Posterior vena cava (tissue), 2 donors: ENCODE measurements at regions of chr14 and their contacts with region 1.

Region 1: DNA sequence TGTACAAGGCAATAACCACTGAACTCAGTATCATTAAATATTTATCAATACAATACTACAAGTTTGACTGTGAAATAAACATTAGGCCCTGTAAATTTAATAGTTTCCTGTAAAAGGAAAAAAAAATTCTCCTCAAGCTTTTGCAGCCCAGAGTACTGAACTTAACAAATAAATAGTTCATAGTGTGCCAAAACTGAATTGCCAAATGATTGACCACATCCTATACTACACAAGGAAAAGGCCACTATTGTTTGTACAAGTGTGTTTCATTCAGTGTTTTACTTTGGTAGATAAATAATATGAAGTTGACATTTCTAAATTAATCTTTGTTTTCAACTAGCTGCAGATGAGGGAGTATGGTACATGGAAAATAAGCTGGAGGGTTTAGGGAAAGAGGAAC is 379.6 kb downstream of the FLRT2 start:
- DNase-seq: no peak

Region 2: DNA sequence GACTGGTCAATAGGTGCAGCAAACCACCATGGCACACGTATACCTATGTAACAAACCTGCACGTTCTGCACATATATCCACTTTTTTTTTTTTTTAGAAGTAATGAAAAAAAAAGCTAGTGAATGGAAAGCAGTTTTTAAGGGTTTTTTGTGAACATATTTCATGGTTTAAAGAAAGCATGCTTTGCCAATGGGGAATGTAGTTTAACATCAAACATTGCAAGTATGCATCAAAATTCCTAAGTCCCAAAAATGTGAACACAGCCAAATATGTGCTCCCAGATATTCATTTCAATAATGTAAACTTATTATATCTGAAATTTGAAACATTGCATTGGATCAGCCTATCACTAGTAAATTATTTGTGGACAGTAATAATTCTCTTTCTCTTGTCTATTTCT is 1090.1 kb before region 1 on chr14:
- intact Hi-C with region 1: loop called in 1 of 2 experiments (anchors 5 kb)
- DNase-seq: no peak

Region 3: GRCh38 chr14:85811340-85811739 is 98.2 kb before region 1 on chr14:
- intact Hi-C with region 1: no loop called
- DNase-seq: no peak